ENCODE measurements at regions of chr15 and their contacts with region 1.

Region 1: GRCh38 chr15:67863442-67863987 is 23.7 kb upstream of the RNU6-1 start:
- ATAC-seq: peak; percentile 96 to 99 (median 98)
- H3K4me3 ChIP-seq: peak overlapping the region; percentile 18 to 32 (median 25)
- H3K27ac ChIP-seq: no peak overlapping the region
- H3K4me1 ChIP-seq: no peaks in the 10 kb centered on the region

Region 2: DNA sequence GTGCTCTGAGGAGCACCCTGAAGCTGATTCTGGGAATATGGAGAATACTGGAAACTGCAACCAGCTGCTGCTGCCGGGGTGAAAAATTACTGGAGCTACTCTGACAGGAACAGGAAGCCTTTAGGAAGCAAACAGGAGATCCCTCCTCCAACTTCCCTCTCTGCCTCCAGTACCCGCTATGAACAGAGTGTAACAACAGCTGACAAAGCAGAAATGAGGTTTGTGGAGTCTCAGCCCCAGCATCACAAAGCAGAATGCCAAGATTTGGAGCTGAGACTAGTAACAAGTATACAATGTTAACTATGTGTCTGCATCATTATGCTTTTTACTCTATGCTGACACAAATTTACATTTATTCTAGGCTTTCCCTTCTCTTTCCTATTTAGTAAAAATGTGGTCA is 167.9 kb after region 1 on chr15:
- in situ Hi-C with region 1: loop called in 1 of 9 experiments (anchors 25 kb)
- ATAC-seq: no peak
- H3K4me3 ChIP-seq: no peak overlapping the region
- H3K27ac ChIP-seq: no peak overlapping the region
- H3K4me1 ChIP-seq: no peaks in the 10 kb centered on the region

Region 3: GRCh38 chr15:68053701-68054627 is 190.4 kb after region 1 on chr15 and contains the start of gene PIAS1:
- in situ Hi-C with region 1: loop called in 2 of 9 experiments (anchors 25 kb)
- ATAC-seq: peak; percentile 83 to 88 (median 85)
- H3K4me3 ChIP-seq: peak within 1 kb of the TSS; percentile 81 to 98 (median 93)
- H3K27ac ChIP-seq: peak within 1 kb of the TSS; percentile 85 to 96
- H3K4me1 ChIP-seq: peaks cover 5 to 20% of the 10 kb centered on the region in 2 donors
- total RNA-seq, gene PIAS1: 20.5 to 47.4 (median 31.3) TPM

Region 4: GRCh38 chr15:68154923-68155559 is 291.5 kb after region 1 on chr15:
- in situ Hi-C with region 1: loop called in 7 of 9 experiments (anchors 10 to 25 kb)
- ATAC-seq: peak in 4 of 8 experiments; percentile 30 to 61 (median 42)
- H3K4me3 ChIP-seq: no peak overlapping the region
- H3K27ac ChIP-seq: no peak overlapping the region
- H3K4me1 ChIP-seq: no peaks in the 10 kb centered on the region